Mammary epithelial cell (primary cell): ENCODE measurements at regions of chr7 and their contacts with region 1.

Region 1: DNA sequence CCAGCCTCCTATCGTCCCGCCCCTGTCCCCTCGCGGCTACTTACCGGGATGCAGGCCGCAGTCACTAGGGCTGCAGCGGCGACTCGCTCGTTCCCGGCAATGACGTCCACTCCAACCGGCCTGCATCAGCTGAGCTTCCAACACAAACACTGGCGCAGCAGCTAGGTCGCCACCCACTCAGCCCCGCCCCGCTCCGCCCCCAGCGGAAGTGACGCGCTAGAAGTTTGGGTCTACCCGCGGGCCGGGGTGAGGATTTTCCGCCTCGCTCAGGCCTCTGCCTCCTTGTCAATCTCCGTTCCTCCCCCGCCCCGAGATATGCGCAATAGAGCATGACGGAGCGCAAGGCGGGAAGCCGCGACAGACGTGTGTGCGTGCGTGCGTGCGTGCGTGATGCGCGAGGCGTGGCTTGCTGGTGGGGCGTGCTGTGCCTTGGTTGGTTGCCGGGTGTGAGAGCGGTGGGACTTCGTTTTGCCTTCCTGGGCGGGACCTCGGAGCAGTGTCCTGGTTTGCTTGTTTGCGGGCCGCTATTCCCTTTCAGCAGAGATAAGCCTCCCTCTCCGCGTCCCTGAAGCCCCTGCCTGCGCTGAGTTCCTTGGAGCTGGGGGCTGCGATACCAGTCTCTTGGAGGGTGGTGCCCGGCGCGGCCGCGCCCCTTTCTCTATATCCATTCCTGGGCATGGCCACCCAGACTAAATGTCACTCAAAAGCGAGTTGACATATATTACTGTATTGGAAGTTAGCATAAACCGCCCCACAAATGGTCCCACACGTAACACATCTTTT is at the start of gene PNPLA8:
- DNase-seq: peak; percentile 100
- H3K4me3 ChIP-seq: peak within 1 kb of the TSS; percentile 75 to 97 (median 94)
- H3K27ac ChIP-seq: peak within 1 kb of the TSS; percentile 99
- H3K4me1 ChIP-seq: peaks cover 29% of the 10 kb centered on the region
- H3K27me3 ChIP-seq: no peaks in the 10 kb centered on the region
- CTCF ChIP-seq: no peak
- total RNA-seq, gene PNPLA8: 24.5 to 26.0 TPM

Region 2: DNA sequence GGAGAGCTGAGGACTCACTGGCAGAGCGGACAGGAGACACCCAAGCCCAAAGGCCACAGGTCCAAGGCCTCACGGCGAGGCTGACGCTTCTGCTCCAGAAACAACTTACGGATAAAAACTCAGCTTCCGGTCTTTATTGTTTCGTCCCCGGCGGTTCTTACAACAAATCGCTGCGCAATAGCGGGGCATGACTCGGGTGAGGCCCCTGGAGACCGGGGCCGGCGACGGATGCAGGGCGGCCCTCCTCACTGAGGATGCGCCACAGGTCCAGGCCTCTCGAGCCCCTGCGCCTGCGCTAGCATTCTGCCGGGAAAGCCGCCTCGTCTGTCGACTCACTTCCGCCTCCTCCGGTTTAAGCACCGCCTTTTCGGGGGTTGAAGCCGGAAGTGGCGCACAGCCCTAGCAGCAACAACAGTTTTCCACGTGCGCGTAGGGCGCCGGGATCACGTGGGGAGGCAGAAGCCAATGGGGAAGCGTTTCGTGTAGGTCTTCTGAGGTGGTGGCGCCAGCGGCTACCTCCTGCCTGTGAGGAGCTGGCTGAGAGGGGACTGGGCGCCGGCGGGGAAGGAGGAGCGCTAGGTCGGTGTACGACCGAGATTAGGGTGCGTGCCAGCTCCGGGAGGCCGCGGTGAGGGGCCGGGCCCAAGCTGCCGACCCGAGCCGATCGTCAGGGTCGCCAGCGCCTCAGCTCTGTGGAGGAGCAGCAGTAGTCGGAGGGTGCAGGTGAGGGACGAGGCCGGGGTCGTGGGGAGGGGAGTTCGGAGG is 43.4 kb after region 1 on chr7 and contains the starts of genes DNAJB9 and THAP5:
- CTCF ChIA-PET with region 1: no interaction called
- dilution Hi-C with region 1: no loop called
- in situ Hi-C with region 1: no loop called
- intact Hi-C with region 1: loop called (anchors 1 kb)
- DNase-seq: peak; percentile 99
- H3K4me3 ChIP-seq: peak within 1 kb of the TSS; percentile 67 to 86 (median 78)
- H3K27ac ChIP-seq: peak within 1 kb of the TSS; percentile 93
- H3K4me1 ChIP-seq: peaks cover 13% of the 10 kb centered on the region
- H3K27me3 ChIP-seq: no peaks in the 10 kb centered on the region
- CTCF ChIP-seq: no peak
- total RNA-seq, gene DNAJB9: 25.8 to 47.0 TPM
- total RNA-seq, gene THAP5: 23.9 to 25.0 TPM